H1 (cell line): ENCODE measurements at regions of chrX and their contacts with region 1.

Region 1: GRCh38 chrX:132615391-132616131 is 126.7 kb upstream of the MBNL3 start:
- DNase-seq: peak; percentile 9 to 63
- H3K4me3 ChIP-seq: no peak overlapping the region
- H3K27ac ChIP-seq: no peak overlapping the region
- H3K4me1 ChIP-seq: no peaks in the 10 kb centered on the region
- H3K27me3 ChIP-seq: no peaks in the 10 kb centered on the region
- CTCF ChIP-seq: peak; percentile 54 to 63 (median 58)
- EP300 ChIP-seq: no peak
- POLR2A ChIP-seq: no peak
- RAD21 ChIP-seq: peak; percentile 56 to 63

Region 2: GRCh38 chrX:132219343-132219768 is 396.2 kb before region 1 on chrX and contains the start of gene RAP2C:
- CTCF ChIA-PET with region 1: interaction called, 13 read pairs
- POLR2A ChIA-PET with region 1: no interaction called
- DNase-seq: peak; percentile 9 to 52
- H3K4me3 ChIP-seq: peak within 1 kb of the TSS; percentile 57 to 85 (median 64)
- H3K27ac ChIP-seq: peak within 1 kb of the TSS; percentile 45; the same call in 1 of the 2 replicates
- H3K4me1 ChIP-seq: no peaks in the 10 kb centered on the region
- H3K27me3 ChIP-seq: no peaks in the 10 kb centered on the region
- CTCF ChIP-seq: peak; percentile 56 to 65 (median 62)
- EP300 ChIP-seq: no peak
- POLR2A ChIP-seq: no peak
- RAD21 ChIP-seq: peak; percentile 53 to 58
- total RNA-seq, gene RAP2C: 20.5 TPM in 2 replicates

Region 3: GRCh38 chrX:132270699-132271098 is 344.9 kb before region 1 on chrX:
- CTCF ChIA-PET with region 1: interaction called, 11 read pairs
- POLR2A ChIA-PET with region 1: no interaction called
- DNase-seq: no peak
- H3K4me3 ChIP-seq: no peak overlapping the region
- H3K27ac ChIP-seq: no peak overlapping the region
- H3K4me1 ChIP-seq: no peaks in the 10 kb centered on the region
- H3K27me3 ChIP-seq: no peaks in the 10 kb centered on the region
- CTCF ChIP-seq: no peak
- EP300 ChIP-seq: no peak
- POLR2A ChIP-seq: no peak
- RAD21 ChIP-seq: no peak

Region 4: DNA sequence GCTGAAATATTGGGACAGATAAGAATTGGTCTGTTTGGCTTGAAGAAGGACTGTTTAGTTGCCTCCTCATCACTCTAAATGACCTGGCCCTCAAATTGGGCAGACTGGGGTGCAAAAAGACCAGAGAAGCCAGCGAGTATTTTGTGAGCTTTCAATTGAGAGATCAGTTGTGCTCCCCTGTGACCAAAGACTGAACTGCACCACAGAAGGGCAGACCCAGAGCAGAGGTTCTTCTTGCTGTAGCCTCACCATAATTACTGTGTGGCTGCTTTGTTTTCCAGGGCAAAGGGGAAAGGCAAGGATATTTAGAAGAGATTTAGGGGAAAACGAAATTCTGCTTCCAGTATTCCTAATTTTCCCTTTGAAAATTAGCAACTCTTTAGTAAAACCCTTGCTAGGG is 22.7 kb before region 1 on chrX:
- CTCF ChIA-PET with region 1: interaction called, 15 read pairs
- POLR2A ChIA-PET with region 1: no interaction called
- DNase-seq: no peak
- H3K4me3 ChIP-seq: no peak overlapping the region
- H3K27ac ChIP-seq: no peak overlapping the region
- H3K4me1 ChIP-seq: no peaks in the 10 kb centered on the region
- H3K27me3 ChIP-seq: no peaks in the 10 kb centered on the region
- CTCF ChIP-seq: peak; percentile 17 to 62 (median 50)
- EP300 ChIP-seq: no peak
- POLR2A ChIP-seq: no peak
- RAD21 ChIP-seq: peak; percentile 64 to 71

Region 5: DNA sequence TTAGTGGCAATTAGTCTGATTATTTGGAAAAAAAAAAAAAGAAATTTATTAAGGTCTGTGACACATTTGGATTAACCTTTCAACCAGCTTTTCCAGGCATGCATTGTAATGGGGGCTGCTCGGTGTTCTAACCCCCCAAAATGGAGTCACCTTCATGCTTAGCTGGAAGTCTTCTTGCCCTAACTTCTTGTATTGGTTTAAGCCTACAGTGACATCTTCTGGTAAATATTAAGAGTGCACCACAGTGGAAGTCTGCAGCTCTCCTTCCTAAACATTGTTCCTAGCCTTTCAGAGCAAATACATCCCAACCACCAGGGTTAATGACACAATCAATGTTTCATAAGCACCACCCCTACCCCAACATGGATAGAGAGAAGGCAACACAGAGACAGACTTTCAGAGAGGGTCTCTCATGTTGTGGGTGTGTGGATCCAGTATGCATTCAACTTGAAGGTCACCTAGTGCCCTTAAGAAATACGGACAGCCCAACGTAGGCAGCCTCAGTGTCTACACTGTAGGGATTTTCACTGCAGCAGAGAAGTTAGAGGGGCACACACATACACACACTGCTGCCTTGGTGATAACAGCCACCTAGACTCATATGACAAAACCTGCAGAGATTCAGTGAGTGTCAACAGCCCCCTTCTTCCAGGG is 16.1 kb after region 1 on chrX:
- CTCF ChIA-PET with region 1: interaction called, 19 read pairs
- POLR2A ChIA-PET with region 1: no interaction called
- DNase-seq: no peak
- H3K4me3 ChIP-seq: no peak overlapping the region
- H3K27ac ChIP-seq: no peak overlapping the region
- H3K4me1 ChIP-seq: no peaks in the 10 kb centered on the region
- H3K27me3 ChIP-seq: no peaks in the 10 kb centered on the region
- CTCF ChIP-seq: peak in 2 of 3 experiments; percentile 39 to 49; a peak in 3 of 4 replicates
- EP300 ChIP-seq: no peak
- POLR2A ChIP-seq: no peak
- RAD21 ChIP-seq: peak; percentile 55 to 58